CD8-positive, alpha-beta memory T cell (primary cell): ENCODE measurements at regions of chr3 and their contacts with region 1.

Region 1: DNA sequence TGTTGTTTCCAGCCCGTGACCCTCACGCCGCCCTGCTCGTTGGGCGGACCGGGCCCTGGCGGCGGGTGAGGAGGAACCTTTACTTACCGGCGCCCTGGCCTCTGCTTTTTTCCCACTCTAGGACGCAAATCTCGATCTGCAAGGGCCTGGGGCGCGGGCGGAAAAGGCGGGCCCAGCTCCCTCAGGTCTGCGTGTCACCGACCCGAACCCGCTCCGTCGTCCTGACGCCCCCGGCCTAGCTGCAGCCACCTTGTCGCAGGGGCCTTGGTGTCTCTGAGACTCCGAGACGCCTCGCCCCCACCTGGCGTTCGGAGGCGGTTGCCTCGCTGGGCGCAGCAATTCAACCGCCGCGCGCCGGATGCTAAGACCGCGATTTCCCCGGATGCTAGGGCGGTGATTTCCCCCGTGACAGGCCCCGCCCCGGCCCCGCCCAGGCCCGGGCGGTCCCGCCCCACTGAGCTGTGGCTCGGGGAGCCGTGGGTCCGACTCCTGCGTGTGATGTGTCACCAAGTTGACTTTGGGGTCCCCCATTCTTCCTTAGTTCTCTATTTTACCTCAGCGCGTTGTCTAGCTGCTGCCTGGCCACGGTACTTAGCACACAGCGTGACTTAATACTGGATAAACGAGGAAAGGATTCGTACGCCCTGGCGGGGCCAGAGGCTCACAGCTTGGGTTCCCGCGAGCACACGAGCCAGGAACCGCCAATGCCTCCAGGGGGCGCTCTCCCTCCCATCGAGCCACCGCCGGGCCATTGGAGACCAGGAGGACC is at the start of gene RPL39L:
- DNase-seq: peak; percentile 89 to 94 (median 90)
- H3K4me3 ChIP-seq: peak within 1 kb of the TSS; percentile 83
- H3K4me3 Mint-ChIP-seq: peak within 1 kb of the TSS; percentile 83 to 97 (median 90)
- H3K27ac ChIP-seq: peak within 1 kb of the TSS; percentile 78
- H3K27ac Mint-ChIP-seq: peak within 1 kb of the TSS; percentile 86 to 96 (median 93)
- H3K4me1 ChIP-seq: peaks cover 14% of the 10 kb centered on the region
- H3K4me1 Mint-ChIP-seq: peaks cover 15 to 27% (median 19%) of the 10 kb centered on the region in 3 donors
- H3K27me3 ChIP-seq: no peaks in the 10 kb centered on the region
- H3K27me3 Mint-ChIP-seq: no peaks in the 10 kb centered on the region
- total RNA-seq, gene RPL39L: 11.3 to 13.1 TPM

Region 2: DNA sequence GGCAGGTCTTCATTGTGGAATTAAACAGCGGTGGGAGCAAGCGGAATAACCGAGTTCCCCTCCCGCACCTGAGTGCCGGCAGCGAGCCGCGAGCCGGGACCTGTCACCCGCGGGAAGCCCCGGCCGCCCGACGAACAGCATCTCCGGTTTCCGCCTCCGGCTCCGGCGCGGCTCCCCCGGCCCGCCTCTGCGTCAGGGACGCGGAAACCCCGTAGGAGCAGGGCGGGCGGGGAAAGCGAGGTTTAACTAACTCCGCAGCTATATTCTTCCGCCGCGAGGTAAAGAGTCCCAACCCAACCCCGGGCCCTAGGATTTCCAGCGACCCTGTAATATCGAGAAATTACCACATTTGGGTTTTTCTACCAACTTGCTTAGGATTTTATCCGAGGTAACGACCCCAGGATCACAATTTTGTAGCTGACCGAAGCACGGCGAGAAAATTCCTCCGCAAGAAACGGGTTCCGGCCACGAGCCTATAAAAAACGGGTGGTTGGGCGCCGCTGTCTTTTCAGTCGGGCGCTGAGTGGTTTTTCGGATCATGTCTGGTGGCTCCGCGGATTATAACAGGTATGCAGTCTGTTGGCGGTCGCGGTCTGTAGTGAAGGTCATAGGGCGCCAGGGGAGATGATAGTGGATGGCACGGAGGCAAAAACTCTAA is 356.1 kb before region 1 on chr3 and contains the start of gene EIF4A2:
- CTCF ChIA-PET with region 1: no interaction called
- POLR2A ChIA-PET with region 1: interaction called, 10 read pairs
- DNase-seq: peak; percentile 85 to 94 (median 92)
- H3K4me3 ChIP-seq: peak within 1 kb of the TSS; percentile 99
- H3K4me3 Mint-ChIP-seq: peak within 1 kb of the TSS; percentile 96 to 99 (median 99)
- H3K27ac ChIP-seq: peak within 1 kb of the TSS; percentile 98
- H3K27ac Mint-ChIP-seq: peak within 1 kb of the TSS; percentile 97 to 100 (median 99)
- H3K4me1 ChIP-seq: peaks cover 44% of the 10 kb centered on the region
- H3K4me1 Mint-ChIP-seq: peaks cover 51 to 58% (median 54%) of the 10 kb centered on the region in 3 donors
- H3K27me3 ChIP-seq: no peaks in the 10 kb centered on the region
- H3K27me3 Mint-ChIP-seq: peaks cover 0 to 13% of the 10 kb centered on the region in 2 donors
- total RNA-seq, gene EIF4A2: 563 to 564 TPM

Region 3: DNA sequence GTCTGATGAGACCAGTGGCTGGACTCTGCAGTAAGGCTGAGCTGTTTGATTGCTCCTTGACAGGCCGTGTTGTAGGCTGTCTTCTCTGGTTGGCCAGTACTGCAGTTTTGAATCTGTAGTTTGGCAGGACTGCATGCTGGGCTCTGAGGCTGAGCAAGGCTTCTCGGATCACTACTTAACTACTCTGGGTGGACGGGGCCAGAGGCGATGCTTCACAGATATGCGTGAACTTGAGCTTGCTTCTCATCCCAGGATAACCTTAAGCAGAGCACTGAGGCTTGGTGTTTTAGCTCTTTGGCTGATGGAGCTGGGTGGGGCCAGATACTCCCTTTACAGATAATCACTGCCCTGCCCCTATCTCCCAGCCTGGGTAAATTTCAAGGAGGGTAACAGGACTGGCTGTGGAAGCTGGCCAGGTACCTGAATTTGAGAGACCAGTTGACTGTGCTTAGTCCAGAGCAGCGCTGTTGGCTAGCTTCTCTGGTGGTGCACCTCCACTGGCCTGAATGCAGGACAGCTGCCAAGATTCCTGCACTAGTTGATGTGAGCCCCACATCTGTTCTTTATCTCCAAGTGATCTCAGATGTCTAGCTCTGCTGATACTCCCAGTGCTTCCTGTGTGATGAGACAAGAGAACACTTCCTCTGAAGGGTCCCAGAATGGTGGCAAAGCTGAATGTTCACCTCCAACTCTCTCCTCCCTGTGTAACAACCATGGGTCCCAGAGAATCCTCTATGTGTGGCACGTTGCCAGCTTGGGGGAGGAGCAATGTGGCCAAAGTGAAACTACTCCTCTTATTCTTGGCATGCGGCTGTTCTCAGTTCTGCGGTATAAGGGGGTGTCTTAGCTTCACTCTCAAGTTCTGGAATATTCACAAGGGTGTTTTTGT is 37.9 kb before region 1 on chr3:
- CTCF ChIA-PET with region 1: interaction called, 12 read pairs
- POLR2A ChIA-PET with region 1: interaction called, 5 read pairs
- DNase-seq: peak; percentile 27 to 68 (median 40)
- H3K4me3 ChIP-seq: peak overlapping the region; percentile 43
- H3K4me3 Mint-ChIP-seq: peak overlapping the region; percentile 17 to 86 (median 74)
- H3K27ac ChIP-seq: no peak overlapping the region
- H3K27ac Mint-ChIP-seq: peak overlapping the region; percentile 11 to 89 (median 56)
- H3K4me1 ChIP-seq: peaks cover 18% of the 10 kb centered on the region
- H3K4me1 Mint-ChIP-seq: peaks cover 17 to 40% (median 27%) of the 10 kb centered on the region in 3 donors
- H3K27me3 ChIP-seq: no peaks in the 10 kb centered on the region
- H3K27me3 Mint-ChIP-seq: no peaks in the 10 kb centered on the region

Region 4: DNA sequence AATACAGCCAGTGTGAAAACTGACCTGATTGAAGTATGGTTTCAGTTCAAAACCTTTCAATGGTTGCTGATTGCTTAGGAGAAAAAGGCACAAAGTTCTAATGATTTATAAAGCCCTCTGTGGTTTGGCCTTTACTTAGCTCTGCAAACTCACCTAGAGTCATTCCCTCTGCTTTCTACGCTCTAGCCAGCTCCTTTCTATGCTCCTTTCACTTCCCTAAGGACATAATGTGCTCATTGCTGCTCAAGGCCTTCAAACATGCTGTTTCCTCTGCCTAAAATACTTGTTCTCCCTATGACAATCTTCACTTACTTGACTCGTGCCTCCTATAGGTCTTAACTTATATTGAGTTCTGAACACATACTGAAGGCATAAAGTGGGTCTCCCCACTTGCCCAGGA is 19.0 kb before region 1 on chr3:
- CTCF ChIA-PET with region 1: interaction called, 15 read pairs
- POLR2A ChIA-PET with region 1: no interaction called
- DNase-seq: no peak
- H3K4me3 ChIP-seq: no peak overlapping the region
- H3K4me3 Mint-ChIP-seq: no peak overlapping the region
- H3K27ac ChIP-seq: no peak overlapping the region
- H3K27ac Mint-ChIP-seq: no peak overlapping the region
- H3K4me1 ChIP-seq: no peaks in the 10 kb centered on the region
- H3K4me1 Mint-ChIP-seq: no peaks in the 10 kb centered on the region
- H3K27me3 ChIP-seq: no peaks in the 10 kb centered on the region
- H3K27me3 Mint-ChIP-seq: no peaks in the 10 kb centered on the region

Region 5: DNA sequence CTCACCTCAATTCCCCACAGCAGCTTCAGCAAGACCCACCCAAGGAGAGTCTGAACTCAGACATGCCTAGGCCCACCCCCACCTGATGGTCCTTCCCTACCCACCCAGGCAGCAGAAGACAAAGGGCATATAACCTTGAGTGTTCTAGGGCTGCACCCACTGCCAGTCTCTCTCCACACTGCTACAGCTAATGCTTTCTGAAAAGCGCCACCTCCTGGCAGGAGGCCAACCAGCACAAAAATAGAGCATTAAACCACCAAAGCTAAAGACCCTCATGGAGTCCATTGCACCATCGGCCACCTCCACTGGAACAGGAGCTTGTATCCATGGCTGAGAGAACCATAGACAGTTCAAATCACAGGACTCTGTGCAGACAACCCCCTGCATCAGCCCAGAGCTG is 11.3 kb after region 1 on chr3:
- CTCF ChIA-PET with region 1: interaction called, 50 read pairs
- POLR2A ChIA-PET with region 1: interaction called, 4 read pairs
- DNase-seq: peak; percentile 47 to 79 (median 56)
- H3K4me3 ChIP-seq: no peak overlapping the region
- H3K4me3 Mint-ChIP-seq: no peak overlapping the region
- H3K27ac ChIP-seq: no peak overlapping the region
- H3K27ac Mint-ChIP-seq: peak overlapping the region in 1 of 8 donors; percentile 54
- H3K4me1 ChIP-seq: no peaks in the 10 kb centered on the region
- H3K4me1 Mint-ChIP-seq: peaks cover 0 to 5% (median 4%) of the 10 kb centered on the region in 3 donors
- H3K27me3 ChIP-seq: no peaks in the 10 kb centered on the region
- H3K27me3 Mint-ChIP-seq: peaks cover 19 to 27% of the 10 kb centered on the region in 2 donors